ENCODE measurements at regions of chrX and their contacts with region 1.

Region 1: GRCh38 chrX:141278302-141278701 is 36.0 kb upstream of the SPANXC start:
- DNase-seq: peak; percentile 51
- H3K4me3 Mint-ChIP-seq: no peak overlapping the region
- H3K27ac Mint-ChIP-seq: no peak overlapping the region
- H3K4me1 Mint-ChIP-seq: no peaks in the 10 kb centered on the region
- H3K27me3 Mint-ChIP-seq: no peaks in the 10 kb centered on the region

Region 2: GRCh38 chrX:140762061-140762460 is 516.2 kb before region 1 on chrX:
- intact Hi-C with region 1: loop called (anchors 5 kb)
- DNase-seq: peak; percentile 74
- H3K4me3 Mint-ChIP-seq: no peak overlapping the region
- H3K27ac Mint-ChIP-seq: no peak overlapping the region
- H3K4me1 Mint-ChIP-seq: peaks cover 3% of the 10 kb centered on the region
- H3K27me3 Mint-ChIP-seq: peaks cover 14% of the 10 kb centered on the region

Region 3: GRCh38 chrX:140817942-140818341 is 460.4 kb before region 1 on chrX:
- intact Hi-C with region 1: loop called (anchors 2 kb)
- DNase-seq: no peak
- H3K4me3 Mint-ChIP-seq: no peak overlapping the region
- H3K27ac Mint-ChIP-seq: no peak overlapping the region
- H3K4me1 Mint-ChIP-seq: peaks cover 6% of the 10 kb centered on the region
- H3K27me3 Mint-ChIP-seq: no peaks in the 10 kb centered on the region

Region 4: DNA sequence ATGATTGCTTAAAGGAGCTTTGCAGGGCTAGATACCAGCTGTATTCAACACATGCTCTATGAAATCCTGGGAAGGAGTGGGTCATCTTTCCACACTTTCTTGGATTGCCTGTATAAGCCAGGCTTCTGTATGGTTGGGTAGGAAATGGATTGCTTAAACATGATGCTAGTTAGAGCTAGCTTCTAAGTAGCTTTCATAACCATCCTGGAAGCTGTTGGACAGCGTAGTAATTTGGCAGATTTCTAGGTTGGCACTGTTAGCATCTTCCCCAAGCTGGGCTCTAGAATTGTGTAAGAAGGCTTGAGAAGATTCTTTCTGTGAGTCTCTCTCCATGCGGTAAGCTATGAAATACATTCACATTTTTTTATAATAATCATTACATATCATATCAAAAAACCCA is 441.4 kb before region 1 on chrX:
- intact Hi-C with region 1: no loop called
- DNase-seq: no peak
- H3K4me3 Mint-ChIP-seq: no peak overlapping the region
- H3K27ac Mint-ChIP-seq: no peak overlapping the region
- H3K4me1 Mint-ChIP-seq: no peaks in the 10 kb centered on the region
- H3K27me3 Mint-ChIP-seq: no peaks in the 10 kb centered on the region